Mammary epithelial cell (primary cell): ENCODE measurements at regions of chr10 and their contacts with region 1.

Region 1: GRCh38 chr10:71974489-71975021 is 10.4 kb downstream of the CHST3 start:
- DNase-seq: peak; percentile 92
- H3K4me3 ChIP-seq: no peak overlapping the region
- H3K27ac ChIP-seq: peak overlapping the region; percentile 88
- H3K4me1 ChIP-seq: peaks cover 96% of the 10 kb centered on the region
- H3K27me3 ChIP-seq: no peaks in the 10 kb centered on the region
- CTCF ChIP-seq: no peak

Region 2: DNA sequence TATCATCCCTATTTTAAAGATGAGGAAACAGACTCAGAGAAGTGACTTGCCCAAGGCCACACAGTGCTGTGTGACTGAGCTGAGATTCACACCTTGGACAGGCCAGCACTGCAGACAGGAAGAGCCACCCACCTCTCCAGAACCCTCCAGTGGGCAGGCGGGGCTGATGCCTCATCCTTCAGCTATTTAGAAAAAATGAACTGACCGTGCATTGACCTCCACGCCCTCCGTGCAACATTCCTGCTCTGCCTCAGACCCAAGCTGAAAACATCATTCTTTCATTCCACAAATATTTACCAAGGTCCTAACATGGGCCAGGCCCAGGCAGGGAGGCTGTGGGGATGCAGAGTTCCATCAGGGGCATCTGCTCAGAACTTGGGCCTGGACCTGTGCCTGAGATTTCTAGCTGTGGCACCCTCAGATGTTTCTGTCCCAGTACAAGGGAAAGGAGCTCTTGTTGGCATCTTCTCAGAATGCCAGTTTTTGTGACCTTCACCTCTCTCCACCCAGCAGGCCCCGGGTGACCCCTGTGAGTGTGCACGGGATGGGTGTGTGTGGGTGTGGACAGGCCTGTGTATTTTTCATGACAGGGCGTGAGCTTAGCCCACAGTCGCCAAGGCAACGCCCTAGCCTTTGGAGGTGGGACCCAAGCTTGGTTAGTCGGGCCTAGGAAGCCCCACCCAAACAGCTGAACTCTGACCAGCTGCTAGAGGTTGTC is 207.7 kb before region 1 on chr10:
- CTCF ChIA-PET with region 1: no interaction called
- dilution Hi-C with region 1: no loop called
- in situ Hi-C with region 1: no loop called
- intact Hi-C with region 1: loop called (anchors 5 kb)
- DNase-seq: peak; percentile 89
- H3K4me3 ChIP-seq: no peak overlapping the region
- H3K27ac ChIP-seq: peak overlapping the region; percentile 92
- H3K4me1 ChIP-seq: peaks cover 57% of the 10 kb centered on the region
- H3K27me3 ChIP-seq: no peaks in the 10 kb centered on the region
- CTCF ChIP-seq: no peak

Region 3: DNA sequence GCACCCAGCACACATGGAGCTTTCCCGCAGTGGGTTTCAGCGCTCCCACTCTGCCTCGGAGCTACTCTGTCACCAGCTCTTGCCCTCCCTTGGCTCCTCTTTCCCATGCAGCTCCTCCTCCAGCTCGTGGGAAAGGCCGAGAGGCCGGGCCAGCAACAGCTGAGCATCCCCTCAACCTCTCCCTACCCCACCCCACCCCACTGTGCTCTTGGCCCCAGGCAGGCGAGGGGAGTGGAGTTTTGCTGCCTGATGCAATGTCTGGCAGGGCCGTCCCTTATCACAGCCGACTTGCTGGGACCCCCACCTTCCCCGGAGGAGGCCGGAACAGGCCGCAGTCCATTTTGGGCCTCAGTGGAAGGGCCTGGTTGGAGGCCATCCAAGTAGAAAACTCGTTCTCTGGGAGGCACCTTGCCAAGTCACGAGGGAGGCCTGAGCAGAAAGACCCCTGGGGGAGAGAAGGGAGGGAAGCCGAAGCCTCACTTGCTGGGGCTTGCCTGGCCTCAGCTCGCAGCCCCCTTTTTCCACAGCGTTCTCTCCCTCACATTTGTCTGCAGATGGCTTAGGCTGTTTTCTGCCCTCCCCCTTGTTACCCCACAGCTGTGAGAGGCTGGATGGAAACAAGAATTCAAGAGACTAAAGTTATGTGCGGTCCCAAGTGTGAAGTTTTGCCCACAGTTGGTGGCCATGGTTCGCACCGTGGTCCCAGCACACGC is 25.0 kb after region 1 on chr10:
- CTCF ChIA-PET with region 1: no interaction called
- dilution Hi-C with region 1: no loop called
- in situ Hi-C with region 1: no loop called
- intact Hi-C with region 1: loop called (anchors 1 kb)
- DNase-seq: no peak
- H3K4me3 ChIP-seq: no peak overlapping the region
- H3K27ac ChIP-seq: peak overlapping the region; percentile 82
- H3K4me1 ChIP-seq: peaks cover 45% of the 10 kb centered on the region
- H3K27me3 ChIP-seq: no peaks in the 10 kb centered on the region
- CTCF ChIP-seq: no peak